CD4-positive, alpha-beta T cell (primary cell): ENCODE measurements at regions of chr15 and their contacts with region 1.

Region 1: GRCh38 chr15:100602064-100602822 is at the starts of genes ASB7 and LINS1:
- DNase-seq: peak; percentile 99 to 100 (median 100)
- ATAC-seq: peak; percentile 89
- H3K4me3 ChIP-seq: peak within 1 kb of the TSS; percentile 96
- H3K4me3 Mint-ChIP-seq: peak within 1 kb of the TSS; percentile 96
- H3K27ac ChIP-seq: peak within 1 kb of the TSS; percentile 84 to 94
- H3K27ac Mint-ChIP-seq: peak within 1 kb of the TSS; percentile 87
- H3K4me1 ChIP-seq: peaks cover 44% of the 10 kb centered on the region
- H3K4me1 Mint-ChIP-seq: peaks cover 62% of the 10 kb centered on the region
- H3K27me3 ChIP-seq: no peaks in the 10 kb centered on the region
- H3K27me3 Mint-ChIP-seq: no peaks in the 10 kb centered on the region
- CTCF ChIP-seq: no peak
- total RNA-seq, gene ASB7: 14.9 to 16.7 TPM
- total RNA-seq, gene LINS1: 38.9 to 39.6 TPM

Region 2: DNA sequence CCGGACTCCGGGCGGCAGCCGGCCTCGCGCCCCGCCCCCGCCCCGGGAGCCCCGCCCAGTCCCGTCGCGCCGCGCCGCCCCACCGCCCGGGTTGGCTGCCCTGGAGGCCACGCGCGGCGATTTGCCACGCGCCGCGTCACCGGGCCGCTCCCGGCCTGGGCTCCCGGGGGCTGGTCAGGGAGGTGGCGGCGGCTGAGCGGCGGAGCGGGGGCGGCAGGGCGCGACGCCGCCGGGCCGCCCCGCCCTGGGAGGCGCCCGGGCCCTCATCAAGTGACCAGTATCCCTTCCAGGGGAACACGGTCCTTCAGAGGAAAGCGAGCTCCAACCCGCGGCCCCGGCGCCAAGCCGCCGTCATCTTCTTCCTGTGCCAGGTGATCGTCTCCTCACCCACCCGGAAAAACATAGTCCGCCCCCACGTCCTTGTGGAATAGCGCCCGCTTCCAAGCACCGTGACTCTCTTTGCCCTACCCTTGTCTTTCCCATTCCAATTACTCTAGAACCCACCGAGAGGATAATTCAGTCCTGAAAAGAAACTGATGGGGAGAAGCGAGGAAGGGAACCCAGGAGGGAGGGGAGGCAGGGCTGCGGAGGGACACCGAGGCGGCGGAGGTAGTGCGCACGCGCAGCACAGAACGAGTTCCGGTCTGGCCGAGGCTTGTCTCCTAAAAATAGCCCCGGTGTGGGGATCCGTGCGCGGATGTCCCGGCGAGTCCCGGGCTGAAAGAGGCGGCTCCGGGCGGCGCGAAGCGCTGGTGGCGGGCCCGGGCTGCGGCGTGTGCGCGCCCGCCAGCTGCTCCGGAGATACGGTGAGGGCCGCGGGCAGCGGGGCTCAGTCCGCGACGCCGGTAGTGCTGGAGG is 1036.7 kb before region 1 on chr15 and contains the start of gene MEF2A:
- CTCF ChIA-PET with region 1: no interaction called
- POLR2A ChIA-PET with region 1: no interaction called
- intact Hi-C with region 1: loop called in 1 of 2 experiments (anchors 10 kb)
- DNase-seq: peak; percentile 84 to 96 (median 88)
- ATAC-seq: peak; percentile 69
- H3K4me3 ChIP-seq: peak within 1 kb of the TSS; percentile 97
- H3K4me3 Mint-ChIP-seq: peak within 1 kb of the TSS; percentile 97
- H3K27ac ChIP-seq: peak within 1 kb of the TSS; percentile 86 to 94
- H3K27ac Mint-ChIP-seq: peak within 1 kb of the TSS; percentile 96
- H3K4me1 ChIP-seq: peaks cover 22% of the 10 kb centered on the region
- H3K4me1 Mint-ChIP-seq: peaks cover 57% of the 10 kb centered on the region
- H3K27me3 ChIP-seq: no peaks in the 10 kb centered on the region
- H3K27me3 Mint-ChIP-seq: no peaks in the 10 kb centered on the region
- CTCF ChIP-seq: no peak
- total RNA-seq, gene MEF2A: 23.2 to 24.9 TPM

Region 3: DNA sequence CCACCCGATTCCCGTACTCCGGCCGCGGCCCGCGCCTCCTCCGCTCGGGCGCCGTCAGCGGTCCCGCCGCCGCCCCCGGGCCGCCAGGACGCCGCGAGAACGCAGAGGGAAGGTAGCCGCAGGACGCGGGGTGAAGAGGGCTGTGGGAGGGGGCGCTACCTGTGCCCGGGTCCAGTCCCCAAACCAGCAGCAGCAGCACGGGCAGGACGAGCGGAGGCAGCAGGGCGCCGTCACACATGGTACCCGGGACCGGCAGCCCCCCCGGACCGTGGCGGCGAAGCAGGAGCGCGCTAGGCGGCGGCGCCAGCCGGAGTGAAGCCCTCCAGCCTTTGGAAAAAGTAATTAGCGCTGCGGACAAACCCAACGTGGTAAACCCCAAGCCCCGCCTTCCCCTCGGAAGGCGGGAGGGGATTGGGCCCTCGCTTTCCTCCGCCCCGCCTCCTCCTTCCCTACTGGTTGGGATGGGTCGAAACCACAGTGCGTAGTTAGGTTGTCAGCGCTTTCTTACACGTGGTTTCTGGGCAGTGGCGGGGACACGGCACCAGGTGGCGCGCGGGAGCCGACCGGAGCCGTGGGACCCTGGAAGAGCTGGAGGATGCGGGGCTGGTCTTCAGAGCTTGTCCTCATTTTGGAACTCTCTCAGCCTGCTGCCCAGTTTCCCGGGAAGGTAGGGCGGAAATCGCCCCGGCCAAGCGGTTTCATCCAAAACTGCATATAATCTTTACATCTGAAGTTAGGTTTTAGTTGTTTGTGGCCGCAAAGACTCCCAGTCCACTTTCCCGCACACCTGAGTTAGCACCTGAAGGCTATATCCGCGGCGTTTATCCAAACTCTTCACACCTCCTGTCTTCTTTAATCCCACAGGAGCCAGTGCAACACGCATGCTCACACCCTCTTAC is 260.3 kb before region 1 on chr15 and contains the start of gene ADAMTS17:
- CTCF ChIA-PET with region 1: interaction called, 5 read pairs
- POLR2A ChIA-PET with region 1: interaction called, 11 read pairs
- intact Hi-C with region 1: loop called (anchors 5 to 10 kb)
- DNase-seq: peak; percentile 89 to 98 (median 94)
- ATAC-seq: peak; percentile 96
- H3K4me3 ChIP-seq: peak within 1 kb of the TSS; percentile 58
- H3K4me3 Mint-ChIP-seq: peak within 1 kb of the TSS; percentile 88
- H3K27ac ChIP-seq: no peak within 1 kb of the TSS
- H3K27ac Mint-ChIP-seq: no peak within 1 kb of the TSS
- H3K4me1 ChIP-seq: peaks cover 27% of the 10 kb centered on the region
- H3K4me1 Mint-ChIP-seq: peaks cover 14% of the 10 kb centered on the region
- H3K27me3 ChIP-seq: no peaks in the 10 kb centered on the region
- H3K27me3 Mint-ChIP-seq: no peaks in the 10 kb centered on the region
- CTCF ChIP-seq: peak; percentile 92
- total RNA-seq, gene ADAMTS17: 9.9 to 13.2 TPM

Region 4: DNA sequence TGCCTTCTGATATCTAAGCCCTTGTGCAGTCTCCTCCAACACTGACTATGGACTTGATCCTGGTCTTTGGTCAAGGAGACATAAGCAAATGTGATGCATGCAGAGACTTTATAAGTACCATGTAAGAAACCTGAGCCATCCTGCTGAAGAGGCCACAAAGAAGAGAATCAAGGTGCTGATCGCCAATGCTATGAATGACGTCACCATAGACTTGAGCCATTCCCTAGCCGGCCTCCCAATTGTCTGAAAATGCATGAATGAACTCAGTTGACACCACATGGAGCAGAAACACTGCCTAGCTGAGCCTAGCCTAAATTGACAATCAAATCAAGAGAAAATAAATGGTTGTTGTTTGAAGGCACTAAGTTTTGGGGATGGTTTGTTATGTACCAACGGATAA is 125.4 kb before region 1 on chr15:
- CTCF ChIA-PET with region 1: no interaction called
- POLR2A ChIA-PET with region 1: no interaction called
- intact Hi-C with region 1: no loop called
- DNase-seq: no peak
- ATAC-seq: no peak
- H3K4me3 ChIP-seq: no peak overlapping the region
- H3K4me3 Mint-ChIP-seq: no peak overlapping the region
- H3K27ac ChIP-seq: no peak overlapping the region
- H3K27ac Mint-ChIP-seq: no peak overlapping the region
- H3K4me1 ChIP-seq: no peaks in the 10 kb centered on the region
- H3K4me1 Mint-ChIP-seq: no peaks in the 10 kb centered on the region
- H3K27me3 ChIP-seq: no peaks in the 10 kb centered on the region
- H3K27me3 Mint-ChIP-seq: no peaks in the 10 kb centered on the region
- CTCF ChIP-seq: no peak

Region 5: DNA sequence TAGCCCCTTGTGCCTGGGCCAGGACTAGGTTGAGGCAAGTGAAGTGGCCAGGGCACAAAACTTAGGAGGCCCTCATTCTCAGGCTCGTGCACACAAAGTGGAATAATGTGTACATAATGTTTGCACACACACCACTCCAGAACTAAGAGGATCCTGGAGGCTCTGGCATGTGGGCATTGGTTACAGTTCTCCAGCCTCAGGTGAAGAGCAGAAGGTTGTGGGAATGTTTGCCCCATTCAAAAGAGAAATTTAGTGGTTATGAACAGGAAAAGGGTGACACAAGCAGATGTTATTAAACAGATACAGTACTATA is 31.5 kb after region 1 on chr15:
- CTCF ChIA-PET with region 1: no interaction called
- POLR2A ChIA-PET with region 1: no interaction called
- intact Hi-C with region 1: no loop called
- DNase-seq: no peak
- ATAC-seq: no peak
- H3K4me3 ChIP-seq: no peak overlapping the region
- H3K4me3 Mint-ChIP-seq: no peak overlapping the region
- H3K27ac ChIP-seq: no peak overlapping the region
- H3K27ac Mint-ChIP-seq: no peak overlapping the region
- H3K4me1 ChIP-seq: peaks cover 36% of the 10 kb centered on the region
- H3K4me1 Mint-ChIP-seq: peaks cover 75% of the 10 kb centered on the region
- H3K27me3 ChIP-seq: no peaks in the 10 kb centered on the region
- H3K27me3 Mint-ChIP-seq: no peaks in the 10 kb centered on the region
- CTCF ChIP-seq: no peak

Region 6: DNA sequence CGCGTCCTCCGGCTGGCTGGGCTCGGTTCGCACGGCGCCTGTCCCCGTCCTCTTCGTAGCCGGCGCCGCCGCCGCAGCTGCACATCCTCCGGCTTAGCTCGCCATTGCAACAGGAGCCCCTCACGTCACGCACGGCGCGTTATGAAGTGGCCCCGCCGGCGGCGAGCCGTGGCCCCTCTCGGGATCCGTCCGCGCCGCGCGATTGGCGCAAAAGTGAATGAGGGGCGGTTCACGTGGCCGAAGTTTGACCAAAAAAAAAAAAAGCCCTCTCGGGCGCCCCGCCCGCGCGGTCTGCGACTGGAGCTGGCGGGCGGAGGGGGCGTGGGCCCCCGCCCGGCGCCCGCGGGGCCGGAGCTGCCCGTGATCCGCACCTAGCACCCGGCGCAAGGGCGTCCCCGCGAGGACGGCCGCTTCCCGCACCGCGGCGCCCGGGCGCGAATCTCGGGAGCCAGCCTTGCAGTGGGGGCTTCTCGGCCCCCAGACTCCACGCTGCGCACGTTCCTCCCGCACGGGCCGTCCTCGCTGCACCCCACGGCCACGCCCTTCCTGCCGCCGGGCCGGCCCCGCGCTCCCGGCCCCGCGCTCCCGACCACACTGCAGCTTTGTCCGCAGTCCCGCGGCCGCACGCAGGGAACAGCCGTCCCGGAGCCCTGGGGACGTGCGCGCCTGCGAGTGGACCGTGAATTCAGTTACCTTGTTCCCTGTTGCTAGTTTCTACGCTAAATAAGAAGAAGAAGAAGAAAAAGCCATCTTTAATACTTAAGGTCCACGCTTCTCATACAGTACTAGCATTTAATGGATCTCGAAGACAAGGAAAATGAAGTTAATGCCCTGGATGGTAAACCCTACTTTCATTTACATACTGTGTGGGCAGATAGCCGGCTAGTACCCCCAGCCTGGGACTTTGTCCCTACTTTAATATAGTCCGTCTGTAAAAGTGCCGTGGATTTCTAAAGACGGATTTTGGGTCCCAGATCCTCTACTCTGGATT is 649.9 kb after region 1 on chr15 and contains the start of gene CHSY1:
- CTCF ChIA-PET with region 1: no interaction called
- POLR2A ChIA-PET with region 1: no interaction called
- intact Hi-C with region 1: loop called in 1 of 2 experiments (anchors 10 kb)
- DNase-seq: peak; percentile 61 to 93 (median 76)
- ATAC-seq: peak; percentile 75
- H3K4me3 ChIP-seq: peak within 1 kb of the TSS; percentile 66
- H3K4me3 Mint-ChIP-seq: peak within 1 kb of the TSS; percentile 100
- H3K27ac ChIP-seq: no peak within 1 kb of the TSS
- H3K27ac Mint-ChIP-seq: peak within 1 kb of the TSS; percentile 89
- H3K4me1 ChIP-seq: peaks cover 25% of the 10 kb centered on the region
- H3K4me1 Mint-ChIP-seq: peaks cover 38% of the 10 kb centered on the region
- H3K27me3 ChIP-seq: no peaks in the 10 kb centered on the region
- H3K27me3 Mint-ChIP-seq: no peaks in the 10 kb centered on the region
- CTCF ChIP-seq: no peak
- total RNA-seq, gene CHSY1: 5.8 to 6.7 TPM

Region 7: DNA sequence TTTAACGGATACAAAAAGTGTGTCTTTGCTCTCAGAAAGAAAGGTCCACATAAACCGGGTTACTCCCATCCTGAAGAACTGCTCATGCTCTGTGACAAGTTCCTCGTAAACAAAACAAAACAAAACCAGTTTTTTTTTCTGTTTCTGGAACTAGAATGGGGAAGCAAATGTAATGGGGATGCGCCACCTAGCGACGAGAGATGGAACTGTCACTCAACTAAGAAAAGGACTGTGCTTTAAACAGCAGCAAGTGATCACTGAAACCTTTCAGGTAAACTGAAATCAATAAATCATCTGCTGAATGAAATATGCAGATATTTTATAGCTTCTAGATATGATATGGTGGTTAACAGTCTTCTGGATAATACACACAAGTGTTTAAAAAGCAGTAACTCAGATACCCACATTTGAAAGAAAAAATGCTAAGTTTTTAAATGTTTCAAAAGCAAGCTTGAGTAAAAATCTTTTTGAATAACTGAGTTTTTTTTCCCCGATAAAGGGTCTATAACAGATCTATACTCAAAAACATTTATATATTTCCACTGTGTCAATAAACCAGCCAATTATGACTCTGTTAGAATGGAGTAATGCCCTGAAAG is 1039.0 kb after region 1 on chr15:
- CTCF ChIA-PET with region 1: no interaction called
- POLR2A ChIA-PET with region 1: no interaction called
- intact Hi-C with region 1: loop called in 1 of 2 experiments (anchors 10 kb)
- DNase-seq: peak; percentile 62 to 90 (median 72)
- ATAC-seq: peak; percentile 66
- H3K4me3 ChIP-seq: no peak overlapping the region
- H3K4me3 Mint-ChIP-seq: no peak overlapping the region
- H3K27ac ChIP-seq: peak overlapping the region; percentile 43 to 74
- H3K27ac Mint-ChIP-seq: peak overlapping the region; percentile 71
- H3K4me1 ChIP-seq: peaks cover 18% of the 10 kb centered on the region
- H3K4me1 Mint-ChIP-seq: peaks cover 42% of the 10 kb centered on the region
- H3K27me3 ChIP-seq: no peaks in the 10 kb centered on the region
- H3K27me3 Mint-ChIP-seq: no peaks in the 10 kb centered on the region
- CTCF ChIP-seq: peak; percentile 98